Endothelial cell of umbilical vein (primary cell): ENCODE measurements at regions of chr14 and their contacts with region 1.

Region 1: DNA sequence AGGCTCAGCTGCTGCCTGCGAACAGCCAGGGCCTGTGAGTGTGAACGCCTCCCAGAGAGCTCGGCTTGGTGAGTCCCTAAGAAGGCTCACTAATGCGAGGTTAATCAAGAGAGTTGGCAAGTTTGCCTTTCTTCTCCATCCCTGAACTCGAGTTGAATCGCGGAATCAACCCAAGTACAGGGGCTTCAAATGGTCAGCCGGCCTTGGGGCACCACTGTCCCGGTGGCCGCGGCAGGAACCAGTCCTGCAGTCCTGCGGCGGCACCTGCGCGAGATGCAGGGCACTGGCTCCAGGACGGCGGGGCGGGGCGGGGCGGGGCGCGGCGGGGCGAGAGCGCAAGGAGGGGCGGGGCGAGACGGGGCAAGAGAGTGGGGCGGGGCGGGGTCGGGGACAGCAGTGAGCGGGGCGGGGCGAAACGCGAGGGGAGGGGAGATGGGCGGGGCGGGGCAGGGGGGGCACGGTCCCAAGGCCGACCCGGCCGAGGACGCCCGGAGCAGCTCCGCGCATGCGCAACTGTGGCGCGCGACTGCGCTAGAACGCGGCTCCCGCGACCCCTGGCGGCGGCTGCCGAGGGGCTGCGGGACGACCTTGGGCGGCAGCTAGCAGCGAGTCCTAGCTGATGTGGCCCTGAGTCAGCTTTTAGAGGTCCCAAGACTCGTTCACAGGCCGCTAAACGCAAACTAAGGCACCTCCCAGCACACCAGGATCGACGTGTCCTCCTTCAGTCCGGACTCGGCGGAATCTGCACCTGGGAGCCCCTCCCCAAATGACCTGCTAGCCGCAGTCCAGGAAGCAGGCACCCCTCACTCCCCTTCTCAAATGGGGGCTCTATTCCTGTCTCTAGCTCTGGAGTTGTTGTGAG is 58.0 kb downstream of the TTC7B start:
- DNase-seq: peak; percentile 94
- H3K4me3 ChIP-seq: peak overlapping the region in 2 of 3 experiments; percentile 34
- H3K27ac ChIP-seq: peak overlapping the region; percentile 61
- H3K4me1 ChIP-seq: peaks cover 15% of the 10 kb centered on the region
- H3K27me3 ChIP-seq: no peaks in the 10 kb centered on the region
- CTCF ChIP-seq: peak; percentile 79 to 94
- POLR2A ChIP-seq: no peak

Region 2: DNA sequence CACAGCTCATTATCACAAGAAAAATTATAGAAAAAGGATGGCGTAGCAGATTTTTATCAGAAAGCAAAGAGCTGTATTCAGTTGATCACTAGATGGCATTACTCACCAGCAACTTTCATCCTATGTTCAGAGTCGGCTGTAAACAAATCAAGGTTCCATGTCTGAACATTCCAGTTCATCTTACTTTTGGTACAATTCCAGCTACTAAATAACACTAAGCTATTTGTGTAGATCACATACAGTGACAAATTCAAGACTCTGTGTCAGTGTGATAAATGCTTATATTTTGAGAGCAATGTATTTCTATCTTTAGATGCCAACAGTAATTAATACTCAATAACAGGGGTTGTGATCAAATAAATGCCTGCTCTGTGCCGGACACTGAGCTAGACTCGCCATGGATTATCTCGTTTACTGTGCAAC is 456.6 kb before region 1 on chr14:
- CTCF ChIA-PET with region 1: interaction called, 108 read pairs
- POLR2A ChIA-PET with region 1: no interaction called
- dilution Hi-C with region 1: no loop called
- intact Hi-C with region 1: loop called (anchors 2 kb)
- DNase-seq: peak; percentile 76
- H3K4me3 ChIP-seq: no peak overlapping the region
- H3K27ac ChIP-seq: no peak overlapping the region
- H3K4me1 ChIP-seq: no peaks in the 10 kb centered on the region
- H3K27me3 ChIP-seq: no peaks in the 10 kb centered on the region
- CTCF ChIP-seq: peak; percentile 22 to 41
- POLR2A ChIP-seq: no peak

Region 3: GRCh38 chr14:90518941-90519256 is 239.4 kb before region 1 on chr14:
- CTCF ChIA-PET with region 1: no interaction called
- POLR2A ChIA-PET with region 1: no interaction called
- dilution Hi-C with region 1: no loop called
- intact Hi-C with region 1: loop called (anchors 1 kb)
- DNase-seq: peak; percentile 44
- H3K4me3 ChIP-seq: no peak overlapping the region
- H3K27ac ChIP-seq: no peak overlapping the region
- H3K4me1 ChIP-seq: no peaks in the 10 kb centered on the region
- H3K27me3 ChIP-seq: no peaks in the 10 kb centered on the region
- CTCF ChIP-seq: peak; percentile 58 to 75
- POLR2A ChIP-seq: no peak

Region 4: DNA sequence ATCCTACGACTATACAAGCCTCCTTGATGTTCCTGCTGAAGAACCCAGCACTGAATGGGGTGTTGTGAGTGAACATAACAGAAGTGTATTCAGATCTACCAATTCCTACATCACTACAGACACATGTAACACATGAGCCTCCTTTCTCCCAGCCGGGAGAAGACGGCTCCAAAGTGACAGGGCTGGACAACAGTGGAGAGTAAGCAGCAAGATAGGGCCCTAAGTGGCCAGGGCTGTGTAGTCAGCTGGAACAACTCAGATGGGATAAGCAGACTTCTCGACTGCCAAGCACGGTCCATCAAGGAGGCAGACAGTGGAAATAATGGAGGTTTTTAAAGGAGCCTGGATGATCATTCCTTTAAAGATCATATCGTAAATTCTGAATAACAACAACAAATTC is 15.5 kb before region 1 on chr14:
- CTCF ChIA-PET with region 1: interaction called, 18 read pairs
- POLR2A ChIA-PET with region 1: no interaction called
- dilution Hi-C with region 1: no loop called
- intact Hi-C with region 1: no loop called
- DNase-seq: no peak
- H3K4me3 ChIP-seq: no peak overlapping the region
- H3K27ac ChIP-seq: no peak overlapping the region
- H3K4me1 ChIP-seq: peaks cover 8% of the 10 kb centered on the region
- H3K27me3 ChIP-seq: no peaks in the 10 kb centered on the region
- CTCF ChIP-seq: no peak
- POLR2A ChIP-seq: no peak

Region 5: GRCh38 chr14:90795746-90796145 is 37.5 kb after region 1 on chr14:
- CTCF ChIA-PET with region 1: interaction called, 45 read pairs
- POLR2A ChIA-PET with region 1: no interaction called
- dilution Hi-C with region 1: no loop called
- intact Hi-C with region 1: loop called (anchors 1 kb)
- DNase-seq: peak; percentile 92
- H3K4me3 ChIP-seq: no peak overlapping the region
- H3K27ac ChIP-seq: peak overlapping the region; percentile 88
- H3K4me1 ChIP-seq: peaks cover 30% of the 10 kb centered on the region
- H3K27me3 ChIP-seq: no peaks in the 10 kb centered on the region
- CTCF ChIP-seq: no peak
- POLR2A ChIP-seq: no peak

Region 6: GRCh38 chr14:90850487-90850886 is 92.2 kb after region 1 on chr14:
- CTCF ChIA-PET with region 1: interaction called, 8 read pairs
- POLR2A ChIA-PET with region 1: no interaction called
- dilution Hi-C with region 1: no loop called
- intact Hi-C with region 1: loop called (anchors 1 kb)
- DNase-seq: peak; percentile 82
- H3K4me3 ChIP-seq: no peak overlapping the region
- H3K27ac ChIP-seq: peak overlapping the region; percentile 91
- H3K4me1 ChIP-seq: peaks cover 20% of the 10 kb centered on the region
- H3K27me3 ChIP-seq: no peaks in the 10 kb centered on the region
- CTCF ChIP-seq: no peak
- POLR2A ChIP-seq: no peak